ENCODE measurements at regions of chr3 and their contacts with region 1.

Region 1: DNA sequence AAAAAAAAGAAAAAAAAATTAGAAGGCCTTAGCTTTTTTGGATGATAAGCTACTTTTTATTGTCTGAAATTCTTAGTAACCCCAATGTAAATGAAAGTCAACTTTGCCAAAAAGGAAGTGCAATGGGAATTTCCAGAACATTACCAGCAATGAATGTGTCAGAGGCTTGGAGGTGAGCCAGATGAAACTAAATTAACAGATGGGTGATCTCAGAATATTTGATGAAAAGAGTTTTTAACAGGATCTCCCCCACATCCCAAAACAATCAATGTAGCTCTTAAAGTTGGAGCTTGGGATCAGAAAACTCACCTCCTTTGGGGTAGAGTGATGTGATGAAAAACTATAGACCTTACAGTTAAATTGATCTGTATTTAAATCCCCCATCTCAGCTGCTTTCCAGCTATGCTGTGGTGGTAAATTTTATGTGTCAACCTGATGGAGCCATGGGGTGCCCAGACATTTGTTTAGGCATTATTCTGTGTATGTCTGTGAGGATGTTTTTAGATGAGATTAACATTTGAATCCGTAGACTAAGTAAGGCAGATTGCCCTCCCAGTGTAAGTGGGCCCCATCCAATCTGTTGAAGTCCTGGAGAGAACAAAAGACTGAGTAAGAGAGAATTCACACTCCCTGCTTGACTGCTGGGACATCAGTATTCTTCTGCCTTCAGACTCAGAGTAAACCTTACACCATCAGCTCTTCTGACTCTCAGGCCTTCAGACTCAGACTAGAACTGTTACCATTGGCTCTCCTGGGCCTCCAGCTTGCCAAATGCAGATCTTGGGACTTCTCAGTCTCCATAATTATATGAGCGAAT is 84.3 kb upstream of the TNFSF10 start:
- DNase-seq: no peak
- H3K4me3 ChIP-seq: no peak overlapping the region
- H3K27ac ChIP-seq: peak overlapping the region; percentile 9 to 77; a peak in 3 of 4 replicates
- H3K4me1 ChIP-seq: peaks cover 0 to 30% of the 10 kb centered on the region in 2 experiments; a peak in 1 of 4 replicates
- H3K27me3 ChIP-seq: no peaks in the 10 kb centered on the region
- CTCF ChIP-seq: no peak
- EP300 ChIP-seq: peak in 1 of 2 experiments; percentile 50; a peak in 1 of 4 replicates
- RAD21 ChIP-seq: no peak

Region 2: DNA sequence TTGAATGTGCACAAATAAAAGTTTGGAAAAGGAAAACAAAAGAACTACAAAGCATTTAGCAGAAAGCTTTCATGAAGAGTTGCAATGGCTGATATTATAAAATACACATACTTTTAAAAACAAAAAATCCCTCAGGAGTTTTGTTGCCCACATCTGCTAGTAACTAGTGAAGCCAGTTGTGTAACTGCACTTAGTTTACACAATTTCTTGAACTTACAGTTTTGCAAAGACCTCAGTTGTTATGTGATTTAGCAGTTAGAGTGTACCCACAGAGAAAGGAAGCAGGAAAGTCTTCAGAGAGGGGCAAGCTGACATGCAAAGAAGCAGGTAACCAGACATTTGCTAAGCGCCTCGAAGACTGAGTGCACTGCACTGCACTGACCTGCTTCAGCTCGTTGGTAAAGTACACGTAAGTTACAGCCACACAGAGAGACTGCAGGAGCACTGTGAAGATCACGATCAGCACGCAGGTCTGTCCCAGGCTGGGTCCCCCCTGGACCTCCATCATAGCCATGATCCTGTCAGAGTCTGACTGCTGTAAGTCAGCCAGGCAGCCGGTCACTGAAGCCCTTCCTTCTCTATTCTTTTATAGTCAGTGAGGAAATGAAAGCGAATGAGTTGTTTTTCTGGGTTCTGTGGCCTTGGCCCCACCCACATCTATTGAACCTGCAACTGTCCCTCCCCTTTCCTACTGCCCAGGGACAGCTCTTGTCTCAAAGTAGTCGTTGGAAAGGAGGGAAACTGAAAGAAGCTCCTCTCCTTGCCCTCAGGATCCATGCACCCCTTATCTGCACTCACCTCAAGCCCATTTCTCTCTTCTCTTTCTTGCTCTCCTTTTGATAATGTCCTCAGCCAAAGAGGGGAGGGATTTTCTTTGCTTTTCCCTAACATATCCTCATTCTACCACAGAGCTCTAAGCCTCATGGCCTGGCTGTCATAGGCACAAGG is 84.4 kb before region 1 on chr3 and contains the start of gene TNFSF10:
- CTCF ChIA-PET with region 1: no interaction called
- POLR2A ChIA-PET with region 1: no interaction called
- DNase-seq: no peak
- H3K4me3 ChIP-seq: no peak within 1 kb of the TSS
- H3K27ac ChIP-seq: no peak within 1 kb of the TSS
- H3K4me1 ChIP-seq: no peaks in the 10 kb centered on the region; a peak in 1 of 4 replicates
- H3K27me3 ChIP-seq: no peaks in the 10 kb centered on the region
- CTCF ChIP-seq: no peak
- EP300 ChIP-seq: no peak
- RAD21 ChIP-seq: no peak
- polyA plus RNA-seq, gene TNFSF10: 0.03 and 0.10 TPM in 2 replicates

Region 3: DNA sequence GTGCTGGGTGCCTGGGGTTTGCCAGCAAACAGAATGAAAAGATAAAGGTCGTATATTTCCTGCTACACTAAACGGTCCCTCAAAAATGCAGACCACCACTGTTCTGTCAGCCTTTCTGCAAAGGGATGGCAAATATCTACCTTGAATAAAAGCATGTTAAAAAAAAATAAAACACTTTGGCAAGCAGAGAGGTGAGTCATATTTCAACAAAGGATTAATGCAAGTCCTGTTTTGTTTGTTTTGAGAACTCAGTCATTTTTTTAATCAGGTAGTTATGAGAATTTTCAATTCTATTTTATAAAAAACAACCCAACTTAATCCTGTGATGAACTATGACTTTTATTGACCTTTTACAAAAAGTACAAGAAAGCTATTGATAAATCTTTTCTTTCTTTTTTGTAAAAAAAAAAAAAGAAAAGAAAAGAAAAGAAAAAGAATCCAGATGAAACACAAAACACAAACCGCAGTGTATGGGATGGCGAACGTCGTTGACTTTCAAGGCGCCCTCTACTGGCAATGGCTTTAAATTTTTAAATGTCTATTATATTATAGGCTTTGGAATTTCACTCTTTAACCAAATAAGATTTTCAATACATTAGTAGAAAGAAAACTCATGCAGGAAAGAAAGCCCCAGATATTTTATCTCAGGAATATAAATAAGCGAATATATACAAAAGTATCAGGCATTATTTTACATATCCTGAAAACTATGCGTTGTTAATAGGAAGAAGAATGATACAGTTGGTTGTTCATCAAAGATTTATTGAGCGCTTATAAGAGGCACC is 15.6 kb after region 1 on chr3:
- CTCF ChIA-PET with region 1: interaction called, 15 read pairs
- POLR2A ChIA-PET with region 1: no interaction called
- DNase-seq: peak; percentile 41
- H3K4me3 ChIP-seq: no peak overlapping the region; a peak in 1 of 4 replicates
- H3K27ac ChIP-seq: peak overlapping the region; percentile 34 to 51; a peak in 3 of 4 replicates
- H3K4me1 ChIP-seq: peaks cover 0 to 11% of the 10 kb centered on the region in 2 experiments; a peak in 1 of 4 replicates
- H3K27me3 ChIP-seq: no peaks in the 10 kb centered on the region
- CTCF ChIP-seq: peak; percentile 86
- EP300 ChIP-seq: no peak
- RAD21 ChIP-seq: peak; percentile 50

Region 4: GRCh38 chr3:172739462-172739861 is 131.9 kb after region 1 on chr3:
- CTCF ChIA-PET with region 1: no interaction called
- POLR2A ChIA-PET with region 1: no interaction called
- DNase-seq: no peak
- H3K4me3 ChIP-seq: no peak overlapping the region
- H3K27ac ChIP-seq: no peak overlapping the region
- H3K4me1 ChIP-seq: no peaks in the 10 kb centered on the region
- H3K27me3 ChIP-seq: no peaks in the 10 kb centered on the region
- CTCF ChIP-seq: no peak
- EP300 ChIP-seq: no peak
- RAD21 ChIP-seq: no peak